CD14-positive monocyte (primary cell): ENCODE measurements at regions of chr14 and their contacts with region 1.

Region 1: DNA sequence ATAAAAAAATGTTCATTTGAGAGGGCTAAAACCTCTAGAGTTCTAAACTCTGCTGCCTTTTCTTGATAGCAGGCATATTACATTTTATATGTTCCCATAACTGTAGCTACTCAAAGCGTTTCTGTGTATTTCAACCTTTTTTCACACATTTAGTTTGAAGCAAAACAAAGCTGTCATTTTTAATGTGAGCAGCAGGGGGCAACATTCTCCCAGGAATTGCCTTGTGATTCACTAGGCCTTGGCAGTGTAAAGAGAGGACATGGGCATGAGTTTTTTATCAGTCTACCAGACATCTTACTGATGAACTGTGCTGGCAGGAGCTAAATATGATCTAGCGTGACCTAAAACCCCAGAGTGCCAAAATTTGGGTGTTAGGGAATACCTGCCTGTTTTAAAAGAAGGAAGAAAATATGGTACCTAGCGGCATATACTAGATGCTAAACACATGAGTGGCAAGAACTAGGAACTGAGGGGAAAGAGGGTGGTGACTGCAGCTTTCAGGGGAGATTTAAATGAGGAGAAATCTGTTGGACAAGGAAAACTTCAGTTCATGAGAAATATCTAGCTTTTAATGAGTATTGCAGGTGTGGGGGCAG is 65.3 kb downstream of the IFT43 start:
- DNase-seq: peak; percentile 19 to 47 (median 42)
- H3K4me3 ChIP-seq: no peak overlapping the region
- H3K4me3 Mint-ChIP-seq: no peak overlapping the region
- H3K27ac ChIP-seq: no peak overlapping the region
- H3K27ac Mint-ChIP-seq: no peak overlapping the region
- H3K4me1 ChIP-seq: peaks cover 3 to 5% of the 10 kb centered on the region in 2 donors
- H3K4me1 Mint-ChIP-seq: peaks cover 6% of the 10 kb centered on the region
- H3K27me3 ChIP-seq: no peaks in the 10 kb centered on the region
- H3K27me3 Mint-ChIP-seq: peaks cover 0 to 4% (median 0%) of the 10 kb centered on the region in 3 donors
- CTCF ChIP-seq: peak; percentile 83

Region 2: GRCh38 chr14:76352639-76353281 is 301.9 kb after region 1 on chr14:
- intact Hi-C with region 1: loop called (anchors 1 to 2 kb)
- DNase-seq: peak; percentile 9 to 34 (median 11)
- H3K4me3 ChIP-seq: no peak overlapping the region
- H3K4me3 Mint-ChIP-seq: peak overlapping the region in 1 of 2 donors; percentile 54
- H3K27ac ChIP-seq: no peak overlapping the region
- H3K27ac Mint-ChIP-seq: peak overlapping the region in 1 of 7 donors; percentile 13
- H3K4me1 ChIP-seq: peaks cover 0 to 5% of the 10 kb centered on the region in 2 donors
- H3K4me1 Mint-ChIP-seq: peaks cover 4% of the 10 kb centered on the region
- H3K27me3 ChIP-seq: peaks cover 0 to 4% of the 10 kb centered on the region in 2 donors
- H3K27me3 Mint-ChIP-seq: peaks cover 12 to 37% (median 16%) of the 10 kb centered on the region in 3 donors
- CTCF ChIP-seq: peak; percentile 89

Region 3: GRCh38 chr14:76386915-76387782 is 336.3 kb after region 1 on chr14:
- intact Hi-C with region 1: loop called (anchors 10 kb)
- DNase-seq: peak; percentile 12 to 31 (median 19)
- H3K4me3 ChIP-seq: no peak overlapping the region
- H3K4me3 Mint-ChIP-seq: peak overlapping the region in 1 of 2 donors; percentile 18
- H3K27ac ChIP-seq: no peak overlapping the region
- H3K27ac Mint-ChIP-seq: no peak overlapping the region
- H3K4me1 ChIP-seq: no peaks in the 10 kb centered on the region
- H3K4me1 Mint-ChIP-seq: no peaks in the 10 kb centered on the region
- H3K27me3 ChIP-seq: peaks cover 24 to 28% of the 10 kb centered on the region in 2 donors
- H3K27me3 Mint-ChIP-seq: peaks cover 29 to 49% (median 48%) of the 10 kb centered on the region in 3 donors
- CTCF ChIP-seq: peak; percentile 93

Region 4: GRCh38 chr14:76647697-76648298 is 596.9 kb after region 1 on chr14:
- intact Hi-C with region 1: loop called (anchors 5 kb)
- DNase-seq: peak; percentile 3 to 37 (median 35)
- H3K4me3 ChIP-seq: no peak overlapping the region
- H3K4me3 Mint-ChIP-seq: no peak overlapping the region
- H3K27ac ChIP-seq: no peak overlapping the region
- H3K27ac Mint-ChIP-seq: no peak overlapping the region
- H3K4me1 ChIP-seq: no peaks in the 10 kb centered on the region
- H3K4me1 Mint-ChIP-seq: no peaks in the 10 kb centered on the region
- H3K27me3 ChIP-seq: no peaks in the 10 kb centered on the region
- H3K27me3 Mint-ChIP-seq: peaks cover 4 to 10% (median 5%) of the 10 kb centered on the region in 3 donors
- CTCF ChIP-seq: peak; percentile 84